ENCODE measurements at regions of chr16 and their contacts with region 1.

Region 1: DNA sequence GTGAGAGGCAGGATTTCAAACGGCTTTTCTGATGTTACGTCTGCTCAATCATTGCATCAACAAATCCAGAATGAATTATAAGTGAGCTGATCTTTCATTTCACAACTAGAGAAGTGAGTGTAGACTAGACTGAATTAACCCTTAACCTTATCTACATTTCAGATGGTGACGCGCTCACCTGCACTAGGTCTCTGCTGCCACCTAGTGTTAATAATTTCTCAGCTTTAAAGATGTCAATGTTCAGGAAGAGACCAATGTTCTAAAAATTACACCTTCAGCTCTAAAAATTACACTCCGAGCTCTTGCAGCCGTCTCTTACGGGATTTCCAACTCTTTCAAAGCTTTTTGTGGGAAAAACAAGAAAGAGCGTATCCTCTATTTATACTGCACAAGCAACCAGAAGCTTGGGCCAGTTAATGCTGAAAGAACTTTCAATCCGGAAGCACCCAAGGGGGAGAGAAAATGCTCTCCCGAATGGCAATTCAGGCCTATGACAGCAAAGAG is 88.2 kb upstream of the FA2H start:
- H3K4me3 ChIP-seq: no peak overlapping the region
- H3K27ac ChIP-seq: no peak overlapping the region
- H3K4me1 ChIP-seq: no peaks in the 10 kb centered on the region
- CTCF ChIP-seq: peak; percentile 59

Region 2: DNA sequence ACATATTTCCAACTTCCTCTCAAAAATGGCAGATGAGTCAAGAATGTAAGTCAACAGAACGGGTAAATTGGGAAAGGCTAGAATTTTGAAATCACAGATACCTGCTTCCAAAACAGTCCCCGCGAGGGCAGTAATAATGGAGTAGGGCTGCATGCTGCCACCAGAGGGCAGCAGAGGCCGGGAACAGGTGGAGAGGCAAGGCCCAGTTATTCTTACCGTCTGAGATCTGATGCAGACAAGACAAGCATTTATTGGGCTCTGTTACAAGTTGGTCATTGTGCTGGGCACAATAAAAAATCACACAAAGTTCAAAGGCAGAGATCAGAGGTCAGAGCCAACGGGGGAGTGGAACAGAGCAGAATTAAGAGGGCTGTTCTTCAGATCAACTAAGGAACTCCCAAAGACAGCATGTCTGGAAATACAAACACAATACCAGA is 153.3 kb before region 1 on chr16:
- CTCF ChIA-PET with region 1: interaction called, 94 read pairs
- POLR2A ChIA-PET with region 1: no interaction called
- H3K4me3 ChIP-seq: no peak overlapping the region
- H3K27ac ChIP-seq: no peak overlapping the region
- H3K4me1 ChIP-seq: no peaks in the 10 kb centered on the region
- CTCF ChIP-seq: peak; percentile 88

Region 3: DNA sequence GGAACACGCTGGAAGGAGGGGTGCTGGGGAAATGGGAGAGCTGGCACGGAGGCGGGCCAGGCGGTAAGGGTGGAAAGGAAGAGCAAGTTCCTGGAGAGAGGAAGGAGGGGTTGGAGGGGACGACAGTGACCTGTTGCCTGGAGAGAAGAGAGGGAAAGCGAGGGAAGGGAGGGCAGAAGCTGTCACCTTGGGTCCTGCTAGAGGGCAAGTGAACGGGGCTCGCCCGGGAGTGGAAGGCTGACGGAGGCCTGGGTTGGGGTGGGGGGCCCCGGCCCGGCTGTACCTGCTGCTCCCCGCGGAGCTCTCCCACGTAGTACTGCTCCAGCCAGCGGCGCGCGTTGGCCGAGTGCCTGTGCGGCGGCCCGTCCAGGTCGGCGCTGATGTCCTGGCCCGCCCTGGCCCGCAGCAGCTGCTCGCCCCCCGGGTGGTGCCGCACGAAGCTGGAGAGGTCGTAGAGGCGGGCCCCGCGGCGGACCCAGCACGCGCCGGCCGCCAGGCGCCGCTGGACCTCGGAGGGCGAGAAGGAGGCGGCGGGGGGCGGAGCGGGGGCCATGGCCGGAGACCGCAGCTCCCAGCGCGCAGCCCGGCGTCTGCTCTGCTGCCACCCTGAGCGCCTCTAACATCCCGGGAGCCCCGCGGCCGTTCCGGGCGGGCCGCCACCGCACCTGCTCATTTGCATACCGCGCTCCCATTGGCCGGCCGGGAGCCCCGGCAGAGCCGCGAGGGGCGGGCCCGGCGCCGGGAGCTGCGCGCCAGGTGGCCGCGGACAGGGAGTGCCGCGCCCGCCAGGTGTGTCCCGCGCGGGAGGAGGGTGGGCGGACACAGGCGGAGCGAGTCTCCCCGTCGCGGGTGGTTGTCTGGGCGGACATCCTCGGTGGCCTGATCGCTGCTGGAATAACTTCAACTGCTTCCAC is 88.3 kb before region 1 on chr16 and contains the start of gene FA2H:
- CTCF ChIA-PET with region 1: interaction called, 14 read pairs
- POLR2A ChIA-PET with region 1: no interaction called
- H3K4me3 ChIP-seq: peak within 1 kb of the TSS; percentile 42
- H3K27ac ChIP-seq: peak within 1 kb of the TSS; percentile 27; the same call in 1 of the 2 replicates
- H3K4me1 ChIP-seq: no peaks in the 10 kb centered on the region
- CTCF ChIP-seq: 0 out of 2 replicates have a peak, but pooled peaks have one; percentile 17

Region 4: DNA sequence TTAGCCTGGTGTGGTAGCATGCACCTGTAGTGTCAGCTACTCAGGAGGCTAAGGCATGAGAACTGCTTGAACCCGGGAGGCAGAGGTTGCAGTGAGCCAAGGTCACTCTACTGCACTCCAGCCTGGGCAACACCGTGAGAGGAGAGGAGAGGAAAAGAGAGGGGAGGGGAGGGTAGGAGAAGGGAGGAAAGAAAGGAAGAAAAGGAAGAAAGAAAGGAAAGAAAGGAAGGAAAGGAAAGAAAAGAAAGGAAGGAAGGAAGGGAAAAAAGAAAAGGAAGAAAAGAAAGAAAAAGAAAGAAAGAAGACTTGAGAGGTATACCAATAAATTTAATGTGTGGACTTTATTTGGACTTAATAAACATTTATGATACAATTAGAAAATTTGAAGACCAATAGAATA is 21.3 kb before region 1 on chr16:
- CTCF ChIA-PET with region 1: interaction called, 14 read pairs
- POLR2A ChIA-PET with region 1: no interaction called
- H3K4me3 ChIP-seq: no peak overlapping the region
- H3K27ac ChIP-seq: no peak overlapping the region
- H3K4me1 ChIP-seq: no peaks in the 10 kb centered on the region
- CTCF ChIP-seq: no peak

Region 5: DNA sequence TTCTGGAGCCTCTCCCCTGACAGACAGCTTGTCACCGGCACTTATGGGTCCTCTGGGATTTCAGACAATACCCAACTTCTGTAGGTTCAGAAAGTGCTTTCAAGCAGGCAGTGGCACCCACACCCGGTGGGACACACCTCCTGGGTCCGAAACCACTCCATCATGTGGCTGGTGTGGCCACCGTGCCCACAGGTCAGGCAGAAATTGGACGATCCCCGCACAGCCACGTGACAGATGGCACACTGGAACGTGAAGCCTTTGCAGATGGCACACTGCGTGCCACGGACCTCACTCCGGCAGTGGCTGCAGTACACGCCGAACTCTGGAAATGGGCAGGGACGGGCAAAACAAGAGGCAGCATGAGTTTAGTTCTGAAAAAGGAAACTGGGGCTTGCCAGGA is 11.3 kb after region 1 on chr16:
- CTCF ChIA-PET with region 1: interaction called, 15 read pairs
- POLR2A ChIA-PET with region 1: no interaction called
- H3K4me3 ChIP-seq: no peak overlapping the region
- H3K27ac ChIP-seq: no peak overlapping the region
- H3K4me1 ChIP-seq: no peaks in the 10 kb centered on the region
- CTCF ChIP-seq: no peak

Measured in HEK293 (cell line).